ENCODE measurements at regions of chr6 and their contacts with region 1.

Region 1: DNA sequence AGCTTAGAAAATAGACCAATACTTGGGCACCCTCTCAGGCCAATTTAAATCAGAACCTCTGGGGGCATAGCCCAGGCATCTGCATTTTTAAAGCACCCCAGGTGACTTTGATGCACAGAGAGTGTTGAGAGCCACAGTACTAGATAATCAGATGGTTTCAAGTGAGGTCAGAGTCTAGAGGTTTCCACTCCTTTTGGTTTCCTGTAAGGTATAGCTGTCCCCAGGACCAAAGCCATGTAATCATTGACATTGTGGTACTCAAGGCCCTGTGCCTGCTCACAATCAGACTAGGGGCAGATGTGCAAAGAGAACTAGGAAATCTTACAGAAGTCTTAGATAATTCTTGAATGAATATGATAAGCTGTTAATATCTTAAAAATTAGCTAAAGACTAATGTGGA is 9.1 kb downstream of the FILIP1 start:
- DNase-seq: no peak
- H3K4me3 ChIP-seq: no peak overlapping the region
- H3K27ac ChIP-seq: no peak overlapping the region
- H3K4me1 ChIP-seq: peaks cover 36% of the 10 kb centered on the region
- H3K27me3 ChIP-seq: no peaks in the 10 kb centered on the region
- CTCF ChIP-seq: no peak
- POLR2A ChIP-seq: no peak

Region 2: GRCh38 chr6:75081921-75082320 is 402.6 kb before region 1 on chr6:
- CTCF ChIA-PET with region 1: no interaction called
- POLR2A ChIA-PET with region 1: no interaction called
- dilution Hi-C with region 1: no loop called
- intact Hi-C with region 1: no loop called
- DNase-seq: no peak
- H3K4me3 ChIP-seq: no peak overlapping the region
- H3K27ac ChIP-seq: no peak overlapping the region
- H3K4me1 ChIP-seq: peaks cover 3% of the 10 kb centered on the region
- H3K27me3 ChIP-seq: no peaks in the 10 kb centered on the region
- CTCF ChIP-seq: no peak
- POLR2A ChIP-seq: no peak

Region 3: GRCh38 chr6:75368151-75368779 is 116.3 kb before region 1 on chr6:
- CTCF ChIA-PET with region 1: interaction called, 3 read pairs
- POLR2A ChIA-PET with region 1: no interaction called
- dilution Hi-C with region 1: no loop called
- intact Hi-C with region 1: loop called (anchors 1 kb)
- DNase-seq: peak; percentile 78
- H3K4me3 ChIP-seq: no peak overlapping the region
- H3K27ac ChIP-seq: no peak overlapping the region
- H3K4me1 ChIP-seq: no peaks in the 10 kb centered on the region
- H3K27me3 ChIP-seq: no peaks in the 10 kb centered on the region
- CTCF ChIP-seq: peak; percentile 37 to 57
- POLR2A ChIP-seq: no peak

Region 4: GRCh38 chr6:75381877-75382633 is 102.5 kb before region 1 on chr6:
- CTCF ChIA-PET with region 1: no interaction called
- POLR2A ChIA-PET with region 1: no interaction called
- dilution Hi-C with region 1: no loop called
- intact Hi-C with region 1: loop called (anchors 2 kb)
- DNase-seq: peak; percentile 84
- H3K4me3 ChIP-seq: no peak overlapping the region
- H3K27ac ChIP-seq: peak overlapping the region; percentile 15
- H3K4me1 ChIP-seq: peaks cover 7% of the 10 kb centered on the region
- H3K27me3 ChIP-seq: peaks cover 0 to 5% of the 10 kb centered on the region in 2 experiments
- CTCF ChIP-seq: no peak
- POLR2A ChIP-seq: no peak

Region 5: GRCh38 chr6:75418233-75418632 is 66.3 kb before region 1 on chr6:
- CTCF ChIA-PET with region 1: no interaction called
- POLR2A ChIA-PET with region 1: no interaction called
- dilution Hi-C with region 1: no loop called
- intact Hi-C with region 1: loop called (anchors 1 kb)
- DNase-seq: peak; percentile 94
- H3K4me3 ChIP-seq: no peak overlapping the region
- H3K27ac ChIP-seq: peak overlapping the region; percentile 81
- H3K4me1 ChIP-seq: peaks cover 48% of the 10 kb centered on the region
- H3K27me3 ChIP-seq: no peaks in the 10 kb centered on the region
- CTCF ChIP-seq: no peak
- POLR2A ChIP-seq: peak; percentile 17

Region 6: GRCh38 chr6:75431379-75431778 is 53.2 kb before region 1 on chr6:
- CTCF ChIA-PET with region 1: no interaction called
- POLR2A ChIA-PET with region 1: no interaction called
- dilution Hi-C with region 1: no loop called
- intact Hi-C with region 1: loop called (anchors 1 kb)
- DNase-seq: peak; percentile 77
- H3K4me3 ChIP-seq: no peak overlapping the region
- H3K27ac ChIP-seq: peak overlapping the region; percentile 15
- H3K4me1 ChIP-seq: peaks cover 10% of the 10 kb centered on the region
- H3K27me3 ChIP-seq: no peaks in the 10 kb centered on the region
- CTCF ChIP-seq: no peak
- POLR2A ChIP-seq: no peak

Measured in endothelial cell of umbilical vein (primary cell).